A549 (cell line): ENCODE measurements at regions of chr14 and their contacts with region 1.

Region 1: DNA sequence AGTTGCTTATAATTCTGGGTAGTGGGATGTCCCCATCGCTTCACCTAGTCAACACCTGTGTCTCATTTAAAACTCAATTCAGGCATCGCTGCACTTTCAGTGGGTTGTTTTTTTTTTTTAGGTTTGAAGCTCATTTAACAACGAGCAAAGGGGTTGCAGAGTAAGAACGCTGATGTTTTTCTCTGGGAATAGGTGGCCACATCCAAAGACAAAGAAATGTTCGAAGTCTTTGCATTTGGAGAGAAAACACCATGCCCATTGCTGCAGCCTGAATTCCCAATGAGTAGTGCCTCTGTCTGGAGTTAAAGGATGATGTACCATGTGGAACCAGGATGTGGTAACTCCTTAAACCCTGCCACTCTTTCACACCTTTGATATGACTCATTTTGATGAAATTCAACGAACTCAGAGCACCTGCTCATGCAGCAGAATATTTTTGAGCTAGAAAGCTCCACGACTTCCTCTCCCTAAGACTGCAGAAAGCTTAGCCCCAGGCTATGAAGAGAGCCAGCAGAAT is 35.1 kb upstream of the BATF start:
- DNase-seq: no peak
- ATAC-seq: no peak
- H3K4me3 ChIP-seq: no peak overlapping the region
- H3K27ac ChIP-seq: peak overlapping the region in 1 of 2 experiments; percentile 4; a peak in 1 of 6 replicates
- H3K4me1 ChIP-seq: peaks cover 8% of the 10 kb centered on the region; the same call in 2 of the 3 replicates
- CTCF ChIP-seq: no peak
- EP300 ChIP-seq: no peak
- POLR2A ChIP-seq: no peak
- RAD21 ChIP-seq: no peak

Region 2: DNA sequence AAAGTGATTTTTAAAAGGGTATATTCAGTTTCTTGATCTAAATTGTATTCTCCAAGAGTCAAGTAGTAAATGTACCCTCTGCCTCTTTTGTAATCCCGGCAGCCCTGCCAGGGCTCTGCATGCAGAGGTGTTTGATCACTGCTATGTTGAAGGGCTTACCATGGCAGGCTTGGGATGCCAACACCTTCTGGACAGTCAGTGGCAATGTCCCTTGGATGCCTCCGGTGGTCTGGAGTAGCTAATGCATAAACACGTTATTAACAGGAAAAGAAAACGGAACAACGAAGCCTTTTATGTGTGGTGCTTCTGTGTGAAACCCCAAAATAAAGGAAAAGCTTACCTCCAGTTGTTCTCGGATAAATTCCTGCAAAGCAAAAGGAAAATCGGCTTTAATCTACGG is 464.6 kb before region 1 on chr14:
- CTCF ChIA-PET with region 1: no interaction called
- POLR2A ChIA-PET with region 1: no interaction called
- DNase-seq: peak; percentile 53 to 59
- ATAC-seq: peak; percentile 90 to 91
- H3K4me3 ChIP-seq: no peak overlapping the region
- H3K27ac ChIP-seq: no peak overlapping the region
- H3K4me1 ChIP-seq: no peaks in the 10 kb centered on the region
- CTCF ChIP-seq: peak; percentile 18; the same call in 1 of the 3 replicates
- EP300 ChIP-seq: no peak
- POLR2A ChIP-seq: no peak
- RAD21 ChIP-seq: peak in 1 of 2 experiments; percentile 36; a peak in 2 of 5 replicates

Region 3: DNA sequence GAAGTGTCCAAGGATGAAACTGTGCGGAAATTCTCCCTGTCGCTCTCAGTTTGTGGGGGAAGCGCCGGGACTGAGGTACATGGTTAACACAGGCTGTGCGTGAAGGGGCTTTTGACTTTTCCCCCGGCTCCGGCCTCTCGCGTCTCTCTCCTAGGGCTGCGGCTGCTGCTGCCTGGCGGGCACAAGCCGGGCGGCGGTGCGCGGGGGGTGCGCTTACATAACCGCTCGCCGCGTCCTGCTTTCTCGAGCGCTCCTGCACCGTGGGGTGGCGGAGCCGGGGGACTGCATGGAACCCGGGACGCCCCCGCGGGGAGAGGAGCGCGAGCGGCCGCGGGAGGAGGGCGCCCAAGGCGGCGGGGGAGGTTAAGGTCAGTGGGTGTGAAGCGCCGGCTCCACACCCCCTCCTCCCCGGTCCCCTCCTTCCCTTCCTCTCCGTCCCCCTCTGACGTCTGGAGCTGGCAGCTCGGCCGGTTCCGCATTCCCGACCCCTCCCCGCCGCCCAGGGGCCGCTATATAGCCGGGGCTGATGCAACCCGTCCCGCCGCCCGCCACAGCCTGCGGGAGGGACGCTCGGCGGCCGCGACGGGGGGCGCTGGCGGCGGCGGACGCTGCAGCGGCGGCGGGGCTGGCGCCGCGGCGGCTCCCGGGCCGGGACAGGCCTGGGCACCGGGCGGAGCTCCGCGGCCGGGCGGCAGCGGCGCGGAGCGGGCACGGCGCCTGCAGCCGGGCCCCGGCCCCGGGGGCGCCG is 59.6 kb before region 1 on chr14 and contains the start of gene JDP2:
- CTCF ChIA-PET with region 1: interaction called, 10 read pairs
- POLR2A ChIA-PET with region 1: no interaction called
- DNase-seq: peak; percentile 64 to 80
- ATAC-seq: peak; percentile 83 to 92
- H3K4me3 ChIP-seq: peak within 1 kb of the TSS; percentile 83
- H3K27ac ChIP-seq: peak within 1 kb of the TSS; percentile 94 to 99
- H3K4me1 ChIP-seq: peaks cover 43% of the 10 kb centered on the region
- CTCF ChIP-seq: no peak
- EP300 ChIP-seq: peak; percentile 29 to 59; a peak in 1 of 5 replicates
- POLR2A ChIP-seq: peak; percentile 37; the same call in 1 of the 2 replicates
- RAD21 ChIP-seq: 0 out of 5 replicates have a peak, but pooled peaks of 1 of the 2 experiments have one; percentile 19
- polyA plus RNA-seq, gene JDP2: 17.2 and 31.2 TPM in 2 replicates

Region 4: GRCh38 chr14:75469606-75470237 is 17.5 kb before region 1 on chr14:
- CTCF ChIA-PET with region 1: interaction called, 17 read pairs
- POLR2A ChIA-PET with region 1: no interaction called
- DNase-seq: no peak
- ATAC-seq: no peak
- H3K4me3 ChIP-seq: no peak overlapping the region
- H3K27ac ChIP-seq: no peak overlapping the region
- H3K4me1 ChIP-seq: no peaks in the 10 kb centered on the region
- CTCF ChIP-seq: no peak
- EP300 ChIP-seq: no peak
- POLR2A ChIP-seq: no peak
- RAD21 ChIP-seq: no peak

Region 5: DNA sequence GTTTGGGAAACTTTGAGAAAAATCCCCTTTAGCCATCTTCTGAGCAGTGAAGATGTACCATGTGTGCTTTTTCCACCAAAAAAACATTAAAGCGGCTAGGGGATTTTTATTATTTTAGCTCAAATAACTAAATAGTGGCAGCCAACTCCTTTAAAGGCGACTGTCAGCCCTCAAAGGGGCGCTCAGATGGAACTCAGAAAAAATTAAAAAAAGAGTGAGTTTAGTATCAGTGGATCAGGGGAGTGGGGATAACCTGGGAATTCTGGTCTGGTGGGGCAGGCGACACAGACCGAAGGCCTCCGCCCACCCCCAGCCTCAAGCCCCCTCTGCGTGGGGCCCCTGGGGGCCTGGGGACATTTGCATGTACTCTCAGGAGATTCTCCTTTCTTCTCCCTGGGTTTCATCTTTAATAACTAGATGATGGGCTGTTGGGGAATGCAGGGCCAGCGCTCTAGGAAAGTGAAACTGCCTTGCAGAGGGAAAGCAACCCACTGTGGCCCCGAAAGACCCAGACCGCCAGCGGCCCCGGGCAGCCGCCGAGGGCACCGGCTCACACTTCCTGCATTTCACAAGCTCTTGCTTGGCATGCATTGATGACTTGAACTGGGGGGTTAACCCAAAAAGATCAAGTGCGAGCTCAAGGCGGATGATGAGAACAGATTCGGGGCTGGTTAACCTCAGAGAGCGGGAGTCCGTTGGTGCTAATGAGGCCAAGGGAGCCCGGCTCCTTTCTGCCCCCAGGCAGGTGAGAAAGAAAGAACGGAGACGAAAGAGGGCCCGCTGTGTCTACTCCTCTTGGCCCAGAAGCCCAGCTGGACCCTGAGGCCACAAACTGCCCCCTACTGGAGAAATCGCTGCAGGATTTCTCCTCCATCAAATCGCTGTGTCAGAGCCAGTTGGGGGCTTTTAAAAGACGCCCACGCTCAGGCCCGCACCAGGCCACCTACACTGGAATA is 27.7 kb after region 1 on chr14:
- CTCF ChIA-PET with region 1: interaction called, 22 read pairs
- POLR2A ChIA-PET with region 1: no interaction called
- DNase-seq: no peak
- ATAC-seq: no peak
- H3K4me3 ChIP-seq: no peak overlapping the region
- H3K27ac ChIP-seq: peak overlapping the region in 1 of 2 experiments; percentile 46; a peak in 3 of 6 replicates
- H3K4me1 ChIP-seq: peaks cover 7% of the 10 kb centered on the region
- CTCF ChIP-seq: no peak
- EP300 ChIP-seq: no peak
- POLR2A ChIP-seq: no peak
- RAD21 ChIP-seq: no peak

Region 6: GRCh38 chr14:75566321-75566720 is 79.1 kb after region 1 on chr14:
- CTCF ChIA-PET with region 1: interaction called, 171 read pairs
- POLR2A ChIA-PET with region 1: no interaction called
- DNase-seq: no peak
- ATAC-seq: 0 out of 6 replicates have a peak, but pooled peaks of 1 of the 2 experiments have one; percentile 21
- H3K4me3 ChIP-seq: no peak overlapping the region
- H3K27ac ChIP-seq: no peak overlapping the region
- H3K4me1 ChIP-seq: no peaks in the 10 kb centered on the region; the same call in 2 of the 3 replicates
- CTCF ChIP-seq: no peak
- EP300 ChIP-seq: no peak
- POLR2A ChIP-seq: no peak
- RAD21 ChIP-seq: no peak